ENCODE measurements at regions of chr5 and their contacts with region 1.

Region 1: DNA sequence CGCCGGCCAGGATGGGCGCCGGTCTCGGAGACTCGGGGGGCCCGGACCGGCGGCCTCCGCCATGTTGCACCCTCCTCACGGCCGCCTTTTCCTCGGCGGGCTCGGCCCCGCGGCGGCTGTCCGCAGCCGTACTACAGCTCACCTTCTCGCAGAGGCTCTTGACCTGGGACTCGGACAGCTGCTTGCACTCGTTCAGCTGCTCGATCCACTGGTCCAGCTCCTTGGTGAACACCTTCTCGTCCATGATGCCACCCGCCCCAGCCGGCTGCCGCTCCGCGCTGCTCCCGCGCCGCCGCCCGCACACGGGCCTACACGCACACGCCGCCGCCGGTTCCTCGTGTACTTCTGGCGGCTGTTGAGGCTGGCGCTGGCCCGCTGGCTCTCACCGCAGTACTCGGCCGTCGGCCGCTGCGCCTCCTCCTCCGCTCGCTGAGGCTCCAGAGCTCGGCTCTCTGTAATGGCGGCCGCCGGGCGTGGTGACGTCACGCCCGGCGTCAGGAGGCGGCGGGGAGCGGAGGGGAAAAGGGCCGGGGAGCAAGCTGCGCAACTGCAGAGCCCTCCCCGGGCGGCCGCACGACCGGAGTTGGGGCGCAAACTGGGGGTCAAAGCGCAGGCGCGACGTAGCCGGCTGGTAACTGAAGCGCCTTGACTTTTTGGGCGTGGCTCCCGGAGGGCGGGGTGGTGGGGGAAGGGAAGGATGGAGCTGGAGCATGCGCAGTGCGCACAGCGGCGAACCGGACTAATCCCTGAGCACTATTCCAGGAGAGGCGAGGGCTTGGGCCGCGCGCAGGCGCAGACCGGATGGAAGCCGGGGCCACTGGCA is at the start of gene PPP2CA:
- DNase-seq: peak; percentile 96
- H3K4me3 ChIP-seq: peak within 1 kb of the TSS; percentile 93
- H3K27ac ChIP-seq: peak within 1 kb of the TSS; percentile 88
- H3K4me1 ChIP-seq: peaks cover 35% of the 10 kb centered on the region
- CTCF ChIP-seq: peak; percentile 28; the same call in 1 of the 2 replicates
- total RNA-seq, gene PPP2CA: 132 and 144 TPM in 2 replicates

Region 2: GRCh38 chr5:134176511-134177368 is 49.1 kb before region 1 on chr5 and contains the start of gene SKP1:
- CTCF ChIA-PET with region 1: no interaction called
- POLR2A ChIA-PET with region 1: interaction called, 22 read pairs
- intact Hi-C with region 1: loop called (anchors 2 kb)
- DNase-seq: peak; percentile 89
- H3K4me3 ChIP-seq: peak within 1 kb of the TSS; percentile 89
- H3K27ac ChIP-seq: peak within 1 kb of the TSS; percentile 75
- H3K4me1 ChIP-seq: peaks cover 23% of the 10 kb centered on the region
- CTCF ChIP-seq: no peak
- total RNA-seq, gene SKP1: 129 and 142 TPM in 2 replicates

Region 3: GRCh38 chr5:134209477-134210240 is 16.2 kb before region 1 on chr5:
- CTCF ChIA-PET with region 1: interaction called, 3 read pairs
- POLR2A ChIA-PET with region 1: interaction called, 69 read pairs
- intact Hi-C with region 1: no loop called
- DNase-seq: no peak
- H3K4me3 ChIP-seq: no peak overlapping the region
- H3K27ac ChIP-seq: no peak overlapping the region
- H3K4me1 ChIP-seq: no peaks in the 10 kb centered on the region
- CTCF ChIP-seq: no peak

Region 4: DNA sequence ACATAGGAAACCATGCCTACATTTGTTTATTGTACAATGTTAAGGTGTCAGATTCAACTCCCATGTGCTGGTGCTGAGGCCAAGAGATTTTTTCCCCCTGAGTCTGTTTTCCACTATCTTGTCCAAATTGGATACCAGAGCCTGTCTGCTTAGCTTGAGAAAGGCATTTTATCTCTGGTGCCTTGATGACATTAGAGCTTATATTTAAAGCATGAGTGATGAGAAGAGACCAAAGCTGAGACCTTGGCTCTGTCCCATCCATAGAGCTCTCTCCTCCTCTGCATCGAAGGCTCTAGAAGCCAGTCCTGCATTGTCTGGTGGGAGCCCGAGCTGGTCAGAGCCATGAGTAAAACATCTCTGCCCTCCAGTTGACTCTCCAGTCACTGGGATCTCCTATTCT is 10.5 kb after region 1 on chr5:
- CTCF ChIA-PET with region 1: no interaction called
- POLR2A ChIA-PET with region 1: interaction called, 10 read pairs
- intact Hi-C with region 1: no loop called
- DNase-seq: no peak
- H3K4me3 ChIP-seq: no peak overlapping the region
- H3K27ac ChIP-seq: no peak overlapping the region
- H3K4me1 ChIP-seq: no peaks in the 10 kb centered on the region
- CTCF ChIP-seq: no peak

Region 5: DNA sequence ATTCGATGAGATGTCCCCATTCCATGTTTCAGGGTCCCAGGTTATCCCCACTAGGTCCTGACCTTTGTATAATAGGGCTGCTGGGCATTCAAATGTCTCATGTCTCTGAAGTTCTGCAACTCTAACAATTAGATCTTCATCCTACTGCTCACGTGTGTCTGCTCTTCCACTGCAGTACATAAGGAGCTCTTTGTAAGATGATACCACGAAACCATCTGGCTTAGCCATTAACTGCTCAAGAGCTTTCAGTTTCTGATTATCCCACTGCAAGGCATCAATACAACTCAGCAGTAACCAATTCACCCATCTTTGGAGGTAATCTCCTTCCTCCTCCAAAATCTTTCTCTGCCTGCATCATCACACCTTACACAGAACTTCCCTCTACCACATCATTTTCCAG is 50.0 kb after region 1 on chr5:
- CTCF ChIA-PET with region 1: no interaction called
- POLR2A ChIA-PET with region 1: no interaction called
- intact Hi-C with region 1: no loop called
- DNase-seq: no peak
- H3K4me3 ChIP-seq: no peak overlapping the region
- H3K27ac ChIP-seq: no peak overlapping the region
- H3K4me1 ChIP-seq: no peaks in the 10 kb centered on the region
- CTCF ChIP-seq: no peak

Region 6: DNA sequence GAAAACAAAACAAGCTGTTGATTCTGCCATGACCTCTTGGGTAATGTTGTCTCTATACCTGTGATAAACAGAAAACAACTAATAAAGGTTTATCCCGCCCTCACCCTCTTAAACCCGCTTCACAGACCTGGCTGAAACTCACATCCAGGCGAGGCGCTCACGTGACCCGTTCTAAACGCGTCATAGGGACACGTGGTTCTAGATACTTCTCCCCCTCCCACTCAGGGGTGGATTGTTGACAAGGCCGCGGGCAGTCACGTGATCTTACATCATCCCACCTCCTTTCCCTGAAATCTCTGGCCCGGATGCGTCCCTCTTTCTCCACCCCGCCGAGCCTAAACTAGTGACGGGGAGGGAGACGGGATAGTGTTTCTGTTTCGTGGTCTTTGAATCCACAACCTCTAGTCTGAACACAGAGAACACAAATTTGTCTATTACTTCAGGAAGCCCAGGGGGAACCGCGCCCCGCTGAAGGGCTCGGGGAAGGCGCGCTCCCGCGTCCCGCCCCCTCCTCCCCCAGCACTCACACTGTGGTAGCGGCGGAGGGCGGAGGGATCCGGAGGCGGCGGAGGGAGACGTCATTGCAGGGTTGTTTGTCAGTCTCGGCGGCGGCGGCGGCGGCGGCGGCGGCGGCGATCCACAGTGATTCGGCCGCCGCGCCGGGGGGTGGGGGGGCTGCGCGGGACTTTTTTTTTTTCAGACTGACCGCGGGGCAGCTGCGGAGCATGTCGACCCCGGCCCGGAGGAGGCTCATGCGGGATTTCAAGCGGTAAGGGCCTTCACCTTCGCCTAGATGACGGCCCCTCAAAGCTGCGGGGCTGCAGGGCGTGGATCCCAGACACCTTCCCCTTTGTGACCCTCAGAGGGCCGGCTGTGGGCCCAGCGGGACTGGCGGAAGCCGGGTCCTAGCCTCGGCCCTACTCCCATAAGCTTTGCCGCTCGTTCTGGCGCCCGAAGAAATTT is 145.3 kb after region 1 on chr5 and contains the start of gene UBE2B:
- CTCF ChIA-PET with region 1: no interaction called
- POLR2A ChIA-PET with region 1: interaction called, 3 read pairs
- intact Hi-C with region 1: loop called (anchors 5 kb)
- DNase-seq: peak; percentile 100
- H3K4me3 ChIP-seq: peak within 1 kb of the TSS; percentile 80
- H3K27ac ChIP-seq: peak within 1 kb of the TSS; percentile 62
- H3K4me1 ChIP-seq: peaks cover 25% of the 10 kb centered on the region
- CTCF ChIP-seq: no peak
- total RNA-seq, gene UBE2B: 7.6 and 26.4 TPM in 2 replicates